Colonic mucosa (tissue), 4 donors: ENCODE measurements at regions of chr17 and their contacts with region 1.

Region 1: GRCh38 chr17:46782250-46782953 is 36.1 kb downstream of the WNT3 start:
- DNase-seq: peak; percentile 36
- H3K4me3 ChIP-seq: no peak overlapping the region
- H3K27ac ChIP-seq: no peak overlapping the region
- H3K4me1 ChIP-seq: no peaks in the 10 kb centered on the region
- H3K27me3 ChIP-seq: no peaks in the 10 kb centered on the region
- CTCF ChIP-seq: peak; percentile 54

Region 2: DNA sequence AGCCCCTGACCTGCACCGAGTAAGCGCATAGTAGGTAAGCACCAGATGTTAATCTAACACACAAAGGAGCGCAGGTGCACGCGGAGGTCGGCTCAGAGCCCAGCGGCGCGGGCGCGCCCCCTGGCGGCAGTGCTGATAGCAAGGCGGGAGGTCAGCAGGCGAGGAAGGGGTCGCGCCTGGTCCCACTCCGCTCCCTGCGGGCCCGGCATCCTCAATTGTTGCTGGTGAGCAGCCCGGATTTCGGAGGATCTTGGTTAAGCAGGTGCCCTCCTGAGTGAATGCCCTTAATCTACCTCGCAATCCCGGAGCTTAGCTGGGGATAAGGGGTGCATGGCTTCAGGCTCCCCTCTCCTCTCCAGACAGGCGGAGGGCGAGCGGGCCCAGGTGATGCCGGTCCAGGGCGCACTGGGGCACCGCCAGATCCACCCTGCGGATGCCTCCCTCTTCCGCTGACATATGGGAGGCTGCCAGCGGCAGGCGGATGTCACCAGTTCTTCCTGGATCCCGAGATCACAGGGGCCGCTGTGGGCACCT is 40.1 kb after region 1 on chr17:
- intact Hi-C with region 1: loop called (anchors 5 kb)
- DNase-seq: peak; percentile 23
- H3K4me3 ChIP-seq: no peak overlapping the region
- H3K27ac ChIP-seq: no peak overlapping the region
- H3K4me1 ChIP-seq: peaks cover 6% of the 10 kb centered on the region
- H3K27me3 ChIP-seq: peaks cover 52% of the 10 kb centered on the region
- CTCF ChIP-seq: peak; percentile 53

Region 3: GRCh38 chr17:46889992-46890564 is 107.7 kb after region 1 on chr17:
- intact Hi-C with region 1: no loop called
- DNase-seq: no peak
- H3K4me3 ChIP-seq: no peak overlapping the region
- H3K27ac ChIP-seq: no peak overlapping the region
- H3K4me1 ChIP-seq: no peaks in the 10 kb centered on the region
- H3K27me3 ChIP-seq: no peaks in the 10 kb centered on the region
- CTCF ChIP-seq: no peak

Region 4: DNA sequence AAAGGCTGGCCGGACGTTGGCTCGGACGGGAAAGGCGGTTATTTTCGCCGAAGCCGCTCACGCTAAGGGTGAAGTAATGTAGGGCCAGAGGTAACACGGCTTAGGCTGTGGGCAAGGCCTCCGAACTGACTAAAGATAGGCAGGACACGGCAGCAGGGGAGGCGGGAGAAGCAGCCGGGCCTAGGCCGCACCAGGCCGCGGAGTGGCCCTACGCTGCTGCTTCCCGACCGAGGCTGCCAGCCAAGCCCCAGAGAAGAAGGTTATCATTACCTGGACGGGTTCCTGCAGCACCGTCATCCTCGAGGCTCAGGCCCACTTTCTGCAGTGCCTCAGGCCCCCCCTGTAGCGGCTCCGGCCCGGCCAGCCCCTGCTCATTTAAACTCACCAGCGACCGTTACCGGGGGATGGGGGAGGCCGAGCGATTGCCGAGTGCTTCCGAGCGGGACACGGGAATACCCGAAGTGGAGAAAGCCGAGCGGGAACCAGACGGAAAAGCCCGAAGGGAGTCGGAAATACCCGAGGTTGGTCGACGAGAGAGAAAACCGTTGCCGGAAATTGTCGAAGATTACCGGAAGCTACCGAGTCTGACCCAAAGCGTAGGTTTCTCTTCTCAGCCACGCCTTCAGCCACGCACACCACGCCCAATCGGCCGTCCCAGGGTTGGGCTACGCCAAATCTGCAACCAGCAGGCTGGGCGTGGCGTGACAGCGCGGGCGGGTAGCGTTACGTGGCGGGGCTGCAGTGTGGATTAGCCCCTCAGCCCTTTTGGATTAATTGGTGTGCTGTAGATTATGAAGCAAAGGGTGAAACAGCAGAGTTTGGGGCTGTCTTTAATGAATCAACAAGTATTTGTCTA is 406.7 kb after region 1 on chr17 and contains the start of gene CDC27:
- intact Hi-C with region 1: no loop called
- DNase-seq: peak; percentile 100
- H3K4me3 ChIP-seq: peak within 1 kb of the TSS; percentile 60
- H3K27ac ChIP-seq: peak within 1 kb of the TSS; percentile 91
- H3K4me1 ChIP-seq: peaks cover 10% of the 10 kb centered on the region
- H3K27me3 ChIP-seq: no peaks in the 10 kb centered on the region
- CTCF ChIP-seq: no peak
- total RNA-seq, gene CDC27: 60.4 to 65.5 TPM